Breast epithelium (tissue), 4 donors: ENCODE measurements at regions of chr14 and their contacts with region 1.

Region 1: DNA sequence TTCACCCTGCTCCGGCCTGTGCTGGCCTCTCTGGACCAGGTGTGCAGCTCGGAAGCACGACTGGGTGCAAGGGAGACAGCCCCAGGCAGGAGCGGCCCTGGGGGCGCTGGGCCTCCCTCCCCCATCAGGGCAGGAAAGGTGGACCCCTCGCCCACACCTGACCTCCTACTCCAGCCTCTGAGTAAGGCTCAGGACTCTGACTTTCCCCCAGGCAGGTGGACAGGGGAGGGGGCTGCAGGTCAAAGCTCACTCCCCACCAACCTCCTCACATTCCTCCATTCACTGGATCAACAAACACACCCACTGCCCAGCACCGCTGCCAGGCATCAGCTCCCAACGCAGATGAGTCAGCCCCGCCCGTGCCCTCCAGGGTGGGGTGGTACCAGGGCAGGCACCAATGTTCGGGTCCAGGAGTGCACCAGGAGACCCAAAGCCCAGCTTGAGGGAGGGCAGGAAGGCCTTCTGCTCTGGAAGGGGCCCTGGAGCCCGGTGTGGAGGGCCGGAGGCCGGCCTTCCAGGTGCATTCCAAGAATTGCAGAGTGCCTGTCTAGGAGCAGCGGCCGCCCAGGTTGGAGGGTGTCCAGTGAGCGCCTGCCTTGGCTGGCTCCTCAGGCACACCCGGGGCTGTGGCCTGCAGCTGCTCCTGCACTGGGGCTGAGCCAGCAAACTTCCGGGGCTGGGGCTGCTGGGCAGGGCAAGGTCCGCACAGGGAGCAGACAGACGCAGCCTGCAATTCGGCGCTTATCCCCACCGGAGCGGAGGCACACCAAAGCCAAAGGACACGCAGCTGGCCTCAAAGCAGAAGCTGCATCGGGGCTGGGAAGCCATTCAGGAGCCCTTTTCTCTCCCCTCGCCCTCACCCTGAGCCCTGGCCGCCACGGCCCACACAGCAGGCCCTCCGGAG is 1.6 kb upstream of the INF2 start:
- DNase-seq: peak; percentile 61 to 88
- H3K4me3 ChIP-seq: peak overlapping the region in 2 of 3 donors; percentile 83 to 98
- H3K27ac ChIP-seq: peak overlapping the region; percentile 90 to 91
- H3K4me1 ChIP-seq: peaks cover 17 to 39% of the 10 kb centered on the region in 2 donors
- H3K27me3 ChIP-seq: no peaks in the 10 kb centered on the region
- CTCF ChIP-seq: no peak
- POLR2A ChIP-seq: no peak

Region 2: DNA sequence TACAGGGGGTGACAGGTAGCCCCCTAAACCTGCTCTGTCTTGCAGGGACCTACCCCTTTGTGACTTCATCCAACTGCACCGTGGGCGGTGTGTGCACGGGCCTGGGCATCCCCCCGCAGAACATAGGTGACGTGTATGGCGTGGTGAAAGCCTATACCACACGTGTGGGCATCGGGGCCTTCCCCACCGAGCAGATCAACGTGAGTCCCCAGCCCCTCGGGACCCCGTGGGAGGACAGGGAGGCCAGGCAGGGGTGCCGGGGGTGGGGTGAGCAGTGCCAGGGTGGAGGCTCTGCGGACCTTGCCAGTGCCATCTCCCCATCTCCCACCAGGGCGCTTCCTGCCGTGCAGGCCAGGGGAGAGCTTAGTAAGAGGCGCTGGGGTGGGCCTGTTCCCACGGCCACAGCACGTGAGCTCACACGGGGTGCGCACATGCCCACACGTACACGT is 54.0 kb after region 1 on chr14:
- intact Hi-C with region 1: loop called (anchors 2 kb)
- DNase-seq: no peak
- H3K4me3 ChIP-seq: no peak overlapping the region
- H3K27ac ChIP-seq: no peak overlapping the region
- H3K4me1 ChIP-seq: no peaks in the 10 kb centered on the region
- H3K27me3 ChIP-seq: no peaks in the 10 kb centered on the region
- CTCF ChIP-seq: no peak
- POLR2A ChIP-seq: no peak